ENCODE measurements at regions of chr15 and their contacts with region 1.

Region 1: GRCh38 chr15:78709263-78709882 is 68.4 kb upstream of the CHRNB4 start:
- DNase-seq: peak; percentile 66
- H3K4me3 ChIP-seq: no peak overlapping the region
- H3K27ac ChIP-seq: no peak overlapping the region
- H3K4me1 ChIP-seq: no peaks in the 10 kb centered on the region
- H3K27me3 ChIP-seq: peaks cover 29% of the 10 kb centered on the region

Region 2: GRCh38 chr15:77944002-77944867 is 765.1 kb before region 1 on chr15:
- in situ Hi-C with region 1: loop called (anchors 25 kb)
- DNase-seq: peak; percentile 93
- H3K4me3 ChIP-seq: peak overlapping the region; percentile 67
- H3K27ac ChIP-seq: peak overlapping the region; percentile 25
- H3K4me1 ChIP-seq: peaks cover 8% of the 10 kb centered on the region; the same call in 1 of the 2 replicates
- H3K27me3 ChIP-seq: no peaks in the 10 kb centered on the region